Activated B cell treated with CpG ODN at 0.5 μM for 24 hours (primary cell): ENCODE measurements at regions of chr9 and their contacts with region 1.

Region 1: DNA sequence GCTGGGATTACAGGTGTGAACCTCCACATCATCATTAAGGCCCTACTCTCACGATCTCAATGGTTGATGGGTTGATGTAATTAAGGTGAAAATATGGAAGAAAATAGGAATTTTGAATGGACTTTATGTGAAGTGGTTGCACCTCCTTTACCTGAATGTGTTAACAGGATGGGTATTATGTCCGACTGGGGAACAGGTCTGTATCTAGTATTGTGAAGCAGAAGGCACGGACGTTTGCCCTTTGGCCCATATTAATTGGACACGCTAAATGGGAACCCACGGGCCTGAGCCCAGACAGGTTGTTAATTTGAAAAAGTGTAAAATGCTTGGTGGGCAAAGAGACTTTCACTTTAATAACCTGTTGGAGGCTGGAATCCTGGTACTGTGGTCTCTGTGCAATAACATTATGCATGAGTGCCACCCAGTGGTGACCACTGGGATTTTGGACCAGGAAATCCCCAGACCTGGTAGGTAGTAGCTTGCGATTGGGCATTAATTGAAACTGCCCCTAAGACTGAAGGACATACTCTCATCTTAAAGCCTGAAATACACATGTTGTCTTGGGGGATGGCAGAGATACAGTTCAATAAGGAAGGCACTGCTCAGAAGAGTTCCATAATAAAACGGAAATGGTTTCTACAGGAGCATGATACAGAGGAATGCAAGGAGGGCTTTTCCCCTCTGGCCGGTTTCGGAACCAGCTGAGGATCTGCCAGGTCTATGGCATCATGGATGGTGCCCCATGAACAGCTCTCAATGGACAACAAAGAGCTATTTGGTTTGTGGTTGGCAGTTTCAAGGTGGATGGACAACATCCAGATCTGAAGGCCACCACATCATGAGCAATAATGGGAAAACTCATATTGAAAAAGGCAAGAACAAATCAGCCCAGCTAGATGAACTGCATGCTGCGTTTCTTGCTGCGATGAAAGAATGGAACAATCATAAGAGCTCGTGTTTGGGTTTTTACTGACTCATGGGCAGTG is 26.2 kb upstream of the BICD2 start:
- DNase-seq: peak; percentile 65
- ATAC-seq: peak; percentile 98
- H3K4me3 Mint-ChIP-seq: no peak overlapping the region
- H3K27ac Mint-ChIP-seq: no peak overlapping the region
- H3K4me1 Mint-ChIP-seq: peaks cover 6% of the 10 kb centered on the region
- H3K27me3 Mint-ChIP-seq: peaks cover 12% of the 10 kb centered on the region
- CTCF ChIP-seq: peak; percentile 84

Region 2: DNA sequence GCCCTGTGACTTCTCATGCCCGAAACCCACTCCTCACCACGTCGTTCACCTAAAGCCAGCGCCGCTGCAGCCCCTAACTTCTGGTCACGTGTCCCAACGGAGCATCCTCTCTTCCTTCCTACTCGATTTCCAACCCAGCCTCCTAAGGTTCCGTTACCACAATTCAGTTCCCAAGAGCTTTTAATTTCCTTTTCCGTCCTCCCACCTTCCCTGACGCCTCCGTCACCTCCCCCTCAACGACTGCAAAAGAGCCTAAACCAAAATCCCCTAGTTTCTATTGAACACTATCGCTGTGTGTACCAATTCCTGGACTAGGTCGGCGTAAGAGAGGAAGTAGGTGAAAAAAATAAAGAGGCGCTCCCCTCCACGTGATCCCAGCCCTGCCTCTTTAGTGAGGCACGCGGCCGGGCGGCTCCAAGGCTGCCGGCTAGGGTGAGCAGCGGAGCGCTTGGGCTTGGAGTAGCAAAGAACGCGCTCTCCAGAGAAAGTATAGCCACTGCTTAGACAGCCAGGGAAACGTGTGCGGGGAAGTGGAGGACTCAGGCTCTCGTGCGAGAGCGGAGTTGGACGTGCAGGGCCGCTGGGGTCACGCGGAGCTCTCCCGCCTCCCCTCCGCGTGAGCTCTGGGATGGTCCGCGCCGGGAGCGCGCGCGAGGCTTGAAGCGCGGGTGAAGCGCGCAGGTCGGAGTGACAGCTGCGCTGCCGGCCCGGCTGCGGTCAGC is 465.4 kb before region 1 on chr9 and contains the starts of genes CENPP and NOL8:
- CTCF ChIA-PET with region 1: no interaction called
- POLR2A ChIA-PET with region 1: no interaction called
- intact Hi-C with region 1: no loop called
- DNase-seq: peak; percentile 74
- ATAC-seq: peak; percentile 91
- H3K4me3 Mint-ChIP-seq: peak within 1 kb of the TSS; percentile 98
- H3K27ac Mint-ChIP-seq: peak within 1 kb of the TSS; percentile 98
- H3K4me1 Mint-ChIP-seq: peaks cover 27% of the 10 kb centered on the region
- H3K27me3 Mint-ChIP-seq: no peaks in the 10 kb centered on the region
- CTCF ChIP-seq: no peak
- total RNA-seq, gene CENPP: 5.7 and 5.9 TPM in 2 replicates
- total RNA-seq, gene NOL8: 67.0 and 78.4 TPM in 2 replicates

Region 3: DNA sequence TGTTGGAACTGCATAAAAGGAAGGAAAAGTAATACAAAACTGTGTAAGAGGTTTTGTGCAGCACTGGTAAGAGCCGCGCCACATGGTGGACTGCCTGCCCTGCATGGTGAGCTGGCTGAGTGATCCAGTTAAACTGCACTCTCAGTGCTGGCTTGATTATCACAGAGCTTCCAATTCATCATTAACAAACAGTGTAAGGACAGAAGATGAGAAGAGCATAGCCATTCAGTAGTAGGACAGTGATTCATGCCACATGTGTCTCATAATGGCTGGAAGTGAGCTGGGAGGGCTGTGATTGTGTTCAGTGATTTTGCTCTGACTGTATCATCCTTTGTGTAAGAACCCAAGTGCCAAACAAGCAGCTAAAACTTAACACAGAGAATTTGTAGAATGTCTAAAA is 322.6 kb before region 1 on chr9:
- CTCF ChIA-PET with region 1: no interaction called
- POLR2A ChIA-PET with region 1: no interaction called
- intact Hi-C with region 1: no loop called
- DNase-seq: no peak
- ATAC-seq: no peak
- H3K4me3 Mint-ChIP-seq: no peak overlapping the region
- H3K27ac Mint-ChIP-seq: no peak overlapping the region
- H3K4me1 Mint-ChIP-seq: no peaks in the 10 kb centered on the region
- H3K27me3 Mint-ChIP-seq: no peaks in the 10 kb centered on the region
- CTCF ChIP-seq: no peak

Region 4: DNA sequence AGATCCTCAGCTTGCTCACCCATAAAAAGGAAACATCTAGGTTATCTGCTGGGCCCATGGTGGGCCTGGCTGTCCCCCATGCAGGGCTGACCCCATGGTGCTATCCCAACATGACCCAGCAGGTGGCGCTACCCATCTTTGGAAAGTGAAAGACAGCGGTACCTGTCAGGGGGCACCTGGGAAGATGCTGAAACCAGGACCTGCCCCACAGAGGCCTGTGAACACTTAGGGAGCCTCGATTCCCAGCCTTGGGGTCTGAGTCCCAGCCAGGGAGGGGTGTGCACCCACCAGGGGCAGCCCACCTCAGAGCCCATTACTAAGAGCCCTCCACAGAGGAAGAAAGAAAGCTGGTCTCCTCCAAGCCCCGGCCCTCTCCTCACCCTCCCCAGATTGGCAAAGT is 74.3 kb before region 1 on chr9:
- CTCF ChIA-PET with region 1: interaction called, 109 read pairs
- POLR2A ChIA-PET with region 1: interaction called, 5 read pairs
- intact Hi-C with region 1: loop called (anchors 1 kb)
- DNase-seq: peak; percentile 76
- ATAC-seq: peak; percentile 75
- H3K4me3 Mint-ChIP-seq: no peak overlapping the region
- H3K27ac Mint-ChIP-seq: no peak overlapping the region
- H3K4me1 Mint-ChIP-seq: peaks cover 51% of the 10 kb centered on the region
- H3K27me3 Mint-ChIP-seq: no peaks in the 10 kb centered on the region
- CTCF ChIP-seq: peak; percentile 75

Region 5: DNA sequence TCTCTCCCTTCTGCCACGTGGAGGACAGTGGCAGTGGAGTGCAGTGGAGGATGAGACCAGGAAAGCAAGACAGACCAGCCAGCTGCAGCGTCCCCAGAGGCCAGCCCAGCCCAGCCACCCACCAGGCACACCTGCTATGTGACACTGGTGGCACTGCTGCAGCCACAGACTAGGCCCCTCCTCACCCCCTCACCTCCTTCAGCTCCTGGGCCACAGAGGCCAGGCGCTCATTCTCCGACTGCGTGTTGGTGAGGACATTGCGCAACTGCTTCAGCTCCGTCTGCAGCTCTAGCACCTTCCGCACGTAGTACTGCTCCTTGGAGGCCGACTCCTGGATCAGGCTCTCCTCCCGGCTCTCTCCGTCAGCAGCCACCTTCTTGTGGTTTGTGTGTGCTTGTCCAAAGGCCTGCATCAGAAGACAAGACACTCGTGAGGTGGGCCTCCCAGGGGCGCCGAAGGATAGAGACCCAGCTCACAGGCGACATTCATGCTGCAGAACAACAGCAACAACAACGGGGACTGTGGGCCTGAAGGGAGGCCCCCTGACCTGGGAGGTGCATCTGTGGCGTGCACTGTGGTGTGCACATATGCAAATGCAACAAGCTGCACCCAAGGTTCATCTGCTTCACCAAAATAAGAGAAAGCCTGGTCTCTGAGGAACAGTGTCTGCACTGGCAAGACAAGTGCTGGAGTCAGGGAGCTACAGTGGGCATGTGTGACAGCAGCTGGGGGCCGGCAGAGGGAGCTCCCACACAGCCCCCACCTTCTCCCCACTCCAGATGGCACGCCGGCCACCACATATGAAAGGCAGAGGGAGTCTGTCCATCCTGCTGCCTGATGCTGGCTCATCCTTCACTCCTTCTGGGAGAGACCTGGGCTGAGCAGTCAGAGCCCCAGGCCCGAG is 61.8 kb before region 1 on chr9:
- CTCF ChIA-PET with region 1: interaction called, 79 read pairs
- POLR2A ChIA-PET with region 1: no interaction called
- intact Hi-C with region 1: loop called (anchors 1 kb)
- DNase-seq: peak; percentile 40
- ATAC-seq: peak; percentile 92
- H3K4me3 Mint-ChIP-seq: peak overlapping the region; percentile 75
- H3K27ac Mint-ChIP-seq: peak overlapping the region; percentile 80
- H3K4me1 Mint-ChIP-seq: peaks cover 86% of the 10 kb centered on the region
- H3K27me3 Mint-ChIP-seq: no peaks in the 10 kb centered on the region
- CTCF ChIP-seq: no peak

Region 6: DNA sequence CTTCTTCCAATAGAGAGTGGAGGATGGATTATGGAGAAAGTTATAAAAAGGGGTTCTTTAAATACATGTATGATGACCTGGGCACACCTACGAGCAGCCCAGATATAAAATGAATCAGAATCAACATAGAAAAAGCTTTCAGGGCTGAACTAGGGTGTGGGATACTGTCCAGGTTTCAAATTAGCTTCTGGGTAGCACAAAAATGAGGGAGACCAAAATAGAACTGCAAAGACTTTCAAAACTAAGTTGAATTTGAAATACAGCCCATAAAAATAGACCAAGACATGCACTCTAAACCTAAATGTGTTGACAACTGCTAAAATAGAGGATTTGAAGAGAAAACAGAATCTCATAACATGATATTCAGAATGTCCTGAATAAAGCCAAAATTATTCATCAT is 70.0 kb after region 1 on chr9:
- CTCF ChIA-PET with region 1: no interaction called
- POLR2A ChIA-PET with region 1: no interaction called
- intact Hi-C with region 1: no loop called
- DNase-seq: no peak
- ATAC-seq: no peak
- H3K4me3 Mint-ChIP-seq: no peak overlapping the region
- H3K27ac Mint-ChIP-seq: no peak overlapping the region
- H3K4me1 Mint-ChIP-seq: peaks cover 2% of the 10 kb centered on the region
- H3K27me3 Mint-ChIP-seq: no peaks in the 10 kb centered on the region
- CTCF ChIP-seq: no peak

Region 7: DNA sequence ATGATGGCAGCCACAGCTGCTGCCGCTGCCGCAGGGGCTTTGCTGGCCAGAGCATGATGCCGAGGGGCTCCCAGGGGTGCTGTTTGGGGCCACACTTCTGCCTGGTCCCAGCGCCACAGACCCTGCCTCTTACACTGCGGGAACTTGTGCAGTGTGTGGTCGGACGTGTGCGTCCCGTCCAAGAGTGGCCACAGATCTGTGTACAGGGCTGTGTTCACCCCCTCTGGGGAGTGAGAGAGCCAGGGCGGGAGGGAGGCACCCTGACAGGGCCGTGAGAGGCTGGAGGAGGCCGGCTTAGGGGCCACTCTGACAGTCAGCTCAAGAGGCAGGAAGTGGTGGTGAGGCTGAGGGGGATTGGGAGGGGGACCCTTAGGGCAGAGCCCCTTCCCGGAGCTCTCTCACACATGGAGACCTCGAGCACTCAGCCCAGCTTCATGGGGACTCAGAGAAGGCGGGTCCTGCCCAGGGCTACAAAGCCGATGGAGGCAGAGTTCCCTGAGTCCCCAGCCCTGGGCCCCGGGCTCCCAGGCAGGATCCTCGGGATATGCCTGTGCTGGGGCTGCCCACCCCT is 292.1 kb after region 1 on chr9:
- CTCF ChIA-PET with region 1: no interaction called
- POLR2A ChIA-PET with region 1: no interaction called
- intact Hi-C with region 1: no loop called
- DNase-seq: no peak
- ATAC-seq: no peak
- H3K4me3 Mint-ChIP-seq: no peak overlapping the region
- H3K27ac Mint-ChIP-seq: no peak overlapping the region
- H3K4me1 Mint-ChIP-seq: peaks cover under 1% of the 10 kb centered on the region
- H3K27me3 Mint-ChIP-seq: no peaks in the 10 kb centered on the region
- CTCF ChIP-seq: no peak